ENCODE measurements at regions of chr3 and their contacts with region 1.

Region 1: DNA sequence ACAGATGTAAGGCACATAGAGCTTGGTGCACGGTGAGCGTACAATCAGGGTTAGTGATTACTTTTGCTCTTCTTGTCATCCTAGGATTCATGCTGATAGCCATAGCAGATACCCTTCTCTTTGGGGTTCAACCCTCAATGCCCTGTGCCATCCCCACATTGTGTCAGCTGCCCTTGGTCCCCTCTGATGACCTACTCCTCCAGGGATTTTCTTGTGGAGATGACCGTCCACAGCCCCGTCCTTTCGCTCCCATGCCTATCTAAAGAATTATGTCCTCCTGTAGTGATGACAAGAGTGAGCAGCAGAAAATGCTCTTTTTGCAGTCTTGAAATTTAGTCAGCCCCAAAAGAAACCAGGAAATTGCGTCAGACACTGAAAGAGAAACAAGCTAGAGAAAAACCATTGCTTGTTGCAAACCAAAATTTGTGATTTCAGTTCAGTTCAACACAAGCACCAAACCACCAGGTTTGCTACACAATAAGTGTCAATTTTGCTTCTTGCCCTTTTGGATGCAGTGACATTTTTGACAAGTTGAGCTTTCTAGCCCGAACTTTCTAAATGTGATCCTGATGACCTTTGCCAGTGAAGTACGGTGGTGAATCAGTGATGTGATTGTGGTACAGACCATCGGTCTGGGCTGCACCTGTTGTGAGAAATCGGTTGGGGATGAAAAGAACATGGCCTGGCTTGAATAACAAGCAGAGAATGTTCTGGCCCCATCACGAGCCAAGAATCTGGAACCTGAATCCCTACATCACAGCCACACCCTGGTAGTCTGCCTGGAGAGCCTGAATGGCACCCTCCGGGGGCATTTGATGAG is 41.3 kb downstream of the CMTM7 start:
- DNase-seq: no peak
- H3K4me3 ChIP-seq: no peak overlapping the region
- H3K27ac ChIP-seq: no peak overlapping the region
- H3K4me1 ChIP-seq: no peaks in the 10 kb centered on the region
- H3K27me3 ChIP-seq: no peaks in the 10 kb centered on the region
- CTCF ChIP-seq: no peak

Region 2: DNA sequence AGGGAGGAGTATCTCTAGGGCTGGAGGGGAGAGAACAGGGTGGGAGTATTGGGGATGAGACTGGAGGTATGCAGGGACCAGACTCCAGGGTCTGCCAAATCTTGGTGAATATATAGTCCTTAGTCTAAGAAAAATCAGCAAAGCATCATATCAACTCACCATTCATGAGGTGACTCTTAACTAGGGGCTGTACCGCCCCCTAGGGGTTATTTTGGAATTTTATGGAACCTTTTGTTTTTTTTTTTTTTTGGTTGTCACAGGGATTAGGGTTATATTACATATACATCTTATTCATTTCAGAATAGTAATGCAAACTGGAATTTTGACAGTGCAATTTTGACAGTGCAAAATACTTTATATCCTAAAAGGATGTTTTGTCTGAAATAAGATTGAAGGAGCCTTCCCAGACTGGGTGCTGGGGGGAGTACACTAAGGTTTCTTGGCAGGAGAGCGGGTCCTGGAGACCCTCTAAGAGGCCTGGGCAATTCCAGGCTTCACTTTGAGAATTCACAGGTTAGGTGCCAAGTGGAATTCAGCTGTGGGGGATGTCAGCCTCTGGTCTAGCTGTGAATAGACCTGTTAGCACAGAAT is 33.8 kb before region 1 on chr3:
- intact Hi-C with region 1: loop called (anchors 5 kb)
- DNase-seq: no peak
- H3K4me3 ChIP-seq: no peak overlapping the region
- H3K27ac ChIP-seq: no peak overlapping the region
- H3K4me1 ChIP-seq: peaks cover 0 to 20% (median 12%) of the 10 kb centered on the region in 4 donors
- H3K27me3 ChIP-seq: no peaks in the 10 kb centered on the region
- CTCF ChIP-seq: peak; percentile 41 to 52

Region 3: DNA sequence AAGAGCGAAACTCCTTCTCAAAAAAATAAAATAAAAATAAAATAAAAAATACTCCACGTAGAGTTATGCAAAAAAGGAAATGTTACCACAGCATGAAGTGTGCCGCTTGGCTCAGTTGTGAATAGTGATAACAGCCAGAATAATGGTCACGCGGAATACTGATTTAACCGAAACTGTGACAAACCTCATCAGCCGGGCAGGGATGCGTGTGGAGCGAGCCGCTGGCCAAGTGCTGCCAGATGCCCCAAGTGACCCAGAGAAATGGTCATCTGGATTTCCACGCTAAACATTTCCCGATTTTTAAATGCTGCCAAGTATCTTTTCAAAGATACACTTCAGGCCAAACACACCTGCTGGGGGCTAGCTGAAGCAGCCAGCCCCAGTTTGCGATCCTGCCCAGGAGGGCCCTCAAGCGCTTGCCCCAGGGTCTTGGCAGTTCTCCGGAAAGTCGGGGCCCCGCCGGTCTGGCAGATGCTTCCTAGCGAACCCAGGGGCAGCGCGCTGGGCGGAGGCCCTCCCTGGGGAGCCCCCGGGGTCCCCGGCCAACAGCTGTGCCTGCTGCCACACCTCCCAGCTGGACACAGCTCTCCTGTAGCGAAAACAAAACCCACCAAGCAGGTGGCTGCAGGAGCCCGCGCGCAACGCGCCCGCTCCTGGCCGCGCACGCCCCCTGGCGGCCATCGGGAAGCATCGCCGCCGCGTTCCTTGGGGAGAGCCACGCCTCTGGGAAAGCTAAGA is 34.6 kb after region 1 on chr3:
- intact Hi-C with region 1: no loop called
- DNase-seq: peak; percentile 53 to 77
- H3K4me3 ChIP-seq: peak overlapping the region; percentile 40 to 47
- H3K27ac ChIP-seq: no peak overlapping the region
- H3K4me1 ChIP-seq: peaks cover 0 to 31% (median 8%) of the 10 kb centered on the region in 4 donors
- H3K27me3 ChIP-seq: no peaks in the 10 kb centered on the region
- CTCF ChIP-seq: peak; percentile 92 to 99

Region 4: DNA sequence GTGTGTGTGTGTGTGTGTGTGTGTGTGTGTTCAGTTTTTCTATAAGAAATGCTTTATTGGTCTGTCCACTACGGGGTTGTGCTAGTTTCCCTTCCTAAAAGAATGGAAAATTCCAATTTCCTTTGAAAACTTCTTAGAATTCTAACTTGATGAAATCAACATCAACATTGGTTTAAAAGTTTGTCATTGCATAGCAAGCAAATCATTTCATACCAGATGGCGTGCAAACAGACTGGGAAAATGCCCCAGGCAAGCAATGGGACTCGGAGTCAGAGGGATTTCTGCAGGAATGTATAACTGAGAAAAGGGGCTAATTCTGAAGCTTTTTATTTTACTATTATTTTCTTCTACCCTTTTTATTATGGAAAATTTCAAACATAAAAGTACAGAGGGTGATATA is 150.8 kb after region 1 on chr3:
- intact Hi-C with region 1: loop called (anchors 5 kb)
- DNase-seq: no peak
- H3K4me3 ChIP-seq: no peak overlapping the region
- H3K27ac ChIP-seq: no peak overlapping the region
- H3K4me1 ChIP-seq: no peaks in the 10 kb centered on the region
- H3K27me3 ChIP-seq: no peaks in the 10 kb centered on the region
- CTCF ChIP-seq: no peak

Measured in tibial artery (tissue), 4 donors.